A549 (cell line): ENCODE measurements at regions of chr2 and their contacts with region 1.

Region 1: GRCh38 chr2:20164061-20164733 is 60.7 kb downstream of the SDC1 start:
- DNase-seq: peak; percentile 58 to 64
- ATAC-seq: peak; percentile 57 to 66
- H3K4me3 ChIP-seq: no peak overlapping the region
- H3K27ac ChIP-seq: peak overlapping the region; percentile 0 to 81; a peak in 4 of 6 replicates
- H3K4me1 ChIP-seq: peaks cover 29% of the 10 kb centered on the region
- CTCF ChIP-seq: no peak
- EP300 ChIP-seq: no peak
- POLR2A ChIP-seq: no peak
- RAD21 ChIP-seq: no peak

Region 2: GRCh38 chr2:20148923-20149668 is 15.1 kb before region 1 on chr2:
- CTCF ChIA-PET with region 1: interaction called, 11 read pairs
- POLR2A ChIA-PET with region 1: no interaction called
- DNase-seq: no peak
- ATAC-seq: peak in 1 of 2 experiments; percentile 22; a peak in 2 of 6 replicates
- H3K4me3 ChIP-seq: no peak overlapping the region
- H3K27ac ChIP-seq: peak overlapping the region; percentile 12 to 61; a peak in 3 of 6 replicates
- H3K4me1 ChIP-seq: peaks cover 26% of the 10 kb centered on the region
- CTCF ChIP-seq: no peak
- EP300 ChIP-seq: no peak
- POLR2A ChIP-seq: no peak
- RAD21 ChIP-seq: no peak

Region 3: DNA sequence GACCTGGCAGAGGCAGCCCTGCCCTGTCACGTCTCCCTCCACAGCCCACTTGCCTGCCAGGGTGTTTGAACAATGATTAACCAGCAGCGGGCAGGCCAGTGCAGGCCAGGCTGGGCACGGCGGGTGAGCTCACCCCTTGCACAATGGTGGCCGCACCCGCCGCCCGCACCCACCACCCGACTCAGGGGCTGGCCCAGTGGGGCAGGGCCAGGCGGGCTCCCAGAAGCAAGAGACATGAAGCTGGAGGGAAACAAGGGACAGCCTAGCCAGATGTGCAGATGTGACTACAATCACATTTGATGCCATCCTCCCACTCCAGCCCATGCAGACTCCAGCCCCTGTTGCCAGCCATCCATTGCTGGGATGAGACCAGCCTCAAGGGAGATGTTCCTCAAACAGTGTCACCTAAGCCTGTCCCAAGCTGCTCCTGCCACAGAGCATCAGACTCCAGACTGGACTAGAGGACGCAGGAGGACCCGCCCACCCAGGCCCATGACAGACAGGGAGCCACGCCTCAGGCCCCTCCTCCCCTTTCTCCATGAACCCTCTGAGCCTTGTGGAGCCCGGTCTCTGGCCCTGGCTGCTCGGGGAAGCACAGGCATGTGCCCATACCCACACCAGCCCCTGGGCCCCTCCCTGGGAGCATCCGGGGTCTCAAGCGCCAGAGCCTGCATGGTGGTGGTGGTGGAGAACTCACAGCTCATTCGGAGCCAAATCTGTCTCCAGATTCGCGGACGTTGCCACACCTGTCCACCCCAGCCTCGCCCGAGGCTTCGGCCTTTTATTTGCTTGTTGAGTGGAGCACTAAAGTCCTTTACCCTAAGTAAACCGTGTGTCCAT is 15.8 kb after region 1 on chr2:
- CTCF ChIA-PET with region 1: interaction called, 13 read pairs
- POLR2A ChIA-PET with region 1: no interaction called
- DNase-seq: peak; percentile 94 to 95
- ATAC-seq: peak; percentile 73 to 85
- H3K4me3 ChIP-seq: no peak overlapping the region
- H3K27ac ChIP-seq: peak overlapping the region; percentile 90 to 98
- H3K4me1 ChIP-seq: peaks cover 67% of the 10 kb centered on the region
- CTCF ChIP-seq: no peak; the same call in 2 of the 3 replicates
- EP300 ChIP-seq: peak in 1 of 2 experiments; percentile 40; a peak in 1 of 5 replicates
- POLR2A ChIP-seq: peak; percentile 57
- RAD21 ChIP-seq: peak; percentile 39 to 65; a peak in 4 of 5 replicates